ENCODE measurements at regions of chr12 and their contacts with region 1.

Region 1: GRCh38 chr12:83143950-83144349 is 457.2 kb downstream of the TMTC2 start:
- DNase-seq: no peak
- ATAC-seq: no peak
- H3K4me3 ChIP-seq: no peak overlapping the region
- H3K4me3 Mint-ChIP-seq: no peak overlapping the region
- H3K27ac ChIP-seq: no peak overlapping the region
- H3K27ac Mint-ChIP-seq: no peak overlapping the region
- H3K4me1 ChIP-seq: no peaks in the 10 kb centered on the region
- H3K4me1 Mint-ChIP-seq: no peaks in the 10 kb centered on the region
- H3K27me3 ChIP-seq: peaks cover 0 to 3% of the 10 kb centered on the region in 2 experiments
- H3K27me3 Mint-ChIP-seq: no peaks in the 10 kb centered on the region
- CTCF ChIP-seq: no peak

Region 2: GRCh38 chr12:83161456-83161855 is 17.5 kb after region 1 on chr12:
- CTCF ChIA-PET with region 1: interaction called, 3 read pairs
- POLR2A ChIA-PET with region 1: no interaction called
- intact Hi-C with region 1: loop called in 1 of 2 experiments (anchors 1 kb)
- DNase-seq: no peak
- ATAC-seq: no peak
- H3K4me3 ChIP-seq: no peak overlapping the region
- H3K4me3 Mint-ChIP-seq: no peak overlapping the region
- H3K27ac ChIP-seq: no peak overlapping the region
- H3K27ac Mint-ChIP-seq: no peak overlapping the region
- H3K4me1 ChIP-seq: no peaks in the 10 kb centered on the region
- H3K4me1 Mint-ChIP-seq: peaks cover 2% of the 10 kb centered on the region
- H3K27me3 ChIP-seq: no peaks in the 10 kb centered on the region
- H3K27me3 Mint-ChIP-seq: no peaks in the 10 kb centered on the region
- CTCF ChIP-seq: no peak